Naive thymus-derived CD4-positive, alpha-beta T cell (primary cell): ENCODE measurements at regions of chr4 and their contacts with region 1.

Region 1: GRCh38 chr4:63831590-63832155 is 577.6 kb downstream of the TECRL start:
- DNase-seq: no peak
- ATAC-seq: no peak
- H3K4me3 ChIP-seq: no peak overlapping the region
- H3K4me3 Mint-ChIP-seq: no peak overlapping the region
- H3K27ac ChIP-seq: no peak overlapping the region
- H3K27ac Mint-ChIP-seq: no peak overlapping the region
- H3K4me1 ChIP-seq: no peaks in the 10 kb centered on the region
- H3K4me1 Mint-ChIP-seq: no peaks in the 10 kb centered on the region
- H3K27me3 ChIP-seq: no peaks in the 10 kb centered on the region
- H3K27me3 Mint-ChIP-seq: no peaks in the 10 kb centered on the region

Region 2: GRCh38 chr4:63777601-63778000 is 54.1 kb before region 1 on chr4:
- CTCF ChIA-PET with region 1: no interaction called
- POLR2A ChIA-PET with region 1: no interaction called
- intact Hi-C with region 1: no loop called
- DNase-seq: no peak
- ATAC-seq: no peak
- H3K4me3 ChIP-seq: no peak overlapping the region
- H3K4me3 Mint-ChIP-seq: no peak overlapping the region
- H3K27ac ChIP-seq: no peak overlapping the region
- H3K27ac Mint-ChIP-seq: no peak overlapping the region
- H3K4me1 ChIP-seq: no peaks in the 10 kb centered on the region
- H3K4me1 Mint-ChIP-seq: no peaks in the 10 kb centered on the region
- H3K27me3 ChIP-seq: no peaks in the 10 kb centered on the region
- H3K27me3 Mint-ChIP-seq: no peaks in the 10 kb centered on the region

Region 3: GRCh38 chr4:63851496-63851895 is 19.8 kb after region 1 on chr4:
- CTCF ChIA-PET with region 1: no interaction called
- POLR2A ChIA-PET with region 1: no interaction called
- intact Hi-C with region 1: loop called (anchors 1 kb)
- DNase-seq: no peak
- ATAC-seq: no peak
- H3K4me3 ChIP-seq: no peak overlapping the region
- H3K4me3 Mint-ChIP-seq: no peak overlapping the region
- H3K27ac ChIP-seq: no peak overlapping the region
- H3K27ac Mint-ChIP-seq: no peak overlapping the region
- H3K4me1 ChIP-seq: no peaks in the 10 kb centered on the region
- H3K4me1 Mint-ChIP-seq: no peaks in the 10 kb centered on the region
- H3K27me3 ChIP-seq: no peaks in the 10 kb centered on the region
- H3K27me3 Mint-ChIP-seq: no peaks in the 10 kb centered on the region